CD4-positive, alpha-beta T cell (primary cell): ENCODE measurements at regions of chr17 and their contacts with region 1.

Region 1: DNA sequence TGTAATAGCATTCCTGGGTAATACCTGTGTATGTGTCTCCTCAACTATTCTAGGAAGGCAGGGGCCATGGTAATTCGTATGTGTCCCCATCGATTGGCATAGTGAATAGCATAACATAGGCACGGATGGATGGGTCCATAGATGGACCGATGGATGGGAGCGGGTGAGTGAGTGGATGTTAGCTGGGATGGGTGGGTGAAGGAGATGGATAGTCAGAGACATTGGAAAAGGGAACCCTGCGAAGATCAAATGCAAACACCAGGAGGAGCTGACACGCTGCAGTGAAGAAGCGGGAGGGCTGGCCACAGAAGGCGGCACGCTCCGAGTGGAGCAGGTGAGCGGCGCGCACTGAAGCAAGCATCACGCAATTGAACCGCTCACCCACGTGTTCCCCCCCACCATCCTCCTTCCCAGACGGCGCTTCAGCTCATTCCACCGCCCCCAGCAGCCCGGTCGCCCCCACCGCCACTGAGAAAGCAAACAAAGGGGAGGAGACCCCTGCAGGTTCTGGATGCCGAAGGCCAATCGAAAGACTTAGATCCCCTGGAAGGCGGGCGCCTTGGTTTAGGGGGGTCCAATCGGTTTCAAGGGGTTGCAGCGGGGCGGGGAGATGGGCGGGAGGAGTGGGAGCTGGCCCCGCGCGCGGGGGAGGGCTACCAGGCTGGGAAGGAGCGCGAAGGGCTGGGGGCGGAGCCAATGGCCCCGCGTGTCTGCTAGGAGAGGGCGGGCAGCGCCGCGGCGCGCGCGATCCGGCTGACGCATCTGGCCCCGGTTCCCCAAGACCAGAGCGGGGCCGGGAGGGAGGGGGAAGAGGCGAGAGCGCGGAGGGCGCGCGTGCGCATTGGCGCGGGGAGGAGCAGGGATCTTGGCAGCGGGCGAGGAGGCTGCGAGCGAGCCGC is at the start of gene ARRB2:
- DNase-seq: peak; percentile 97 to 100 (median 99)
- ATAC-seq: peak; percentile 79
- H3K4me3 ChIP-seq: peak within 1 kb of the TSS; percentile 90
- H3K4me3 Mint-ChIP-seq: peak within 1 kb of the TSS; percentile 98
- H3K27ac ChIP-seq: peak within 1 kb of the TSS; percentile 82 to 92
- H3K27ac Mint-ChIP-seq: peak within 1 kb of the TSS; percentile 83
- H3K4me1 ChIP-seq: peaks cover 52% of the 10 kb centered on the region
- H3K4me1 Mint-ChIP-seq: peaks cover 59% of the 10 kb centered on the region
- H3K27me3 ChIP-seq: no peaks in the 10 kb centered on the region
- H3K27me3 Mint-ChIP-seq: no peaks in the 10 kb centered on the region
- CTCF ChIP-seq: peak; percentile 86
- total RNA-seq, gene ARRB2: 210 to 220 TPM

Region 2: GRCh38 chr17:4721203-4722135 is 11.4 kb after region 1 on chr17:
- CTCF ChIA-PET with region 1: interaction called, 3 read pairs
- POLR2A ChIA-PET with region 1: interaction called, 12 read pairs
- intact Hi-C with region 1: no loop called
- DNase-seq: peak in 4 of 14 experiments; percentile 30 to 67 (median 43)
- ATAC-seq: no peak
- H3K4me3 ChIP-seq: no peak overlapping the region
- H3K4me3 Mint-ChIP-seq: no peak overlapping the region
- H3K27ac ChIP-seq: peak overlapping the region in 1 of 2 donors; percentile 9
- H3K27ac Mint-ChIP-seq: peak overlapping the region; percentile 28
- H3K4me1 ChIP-seq: peaks cover 18% of the 10 kb centered on the region
- H3K4me1 Mint-ChIP-seq: peaks cover 7% of the 10 kb centered on the region
- H3K27me3 ChIP-seq: no peaks in the 10 kb centered on the region
- H3K27me3 Mint-ChIP-seq: no peaks in the 10 kb centered on the region
- CTCF ChIP-seq: no peak

Region 3: DNA sequence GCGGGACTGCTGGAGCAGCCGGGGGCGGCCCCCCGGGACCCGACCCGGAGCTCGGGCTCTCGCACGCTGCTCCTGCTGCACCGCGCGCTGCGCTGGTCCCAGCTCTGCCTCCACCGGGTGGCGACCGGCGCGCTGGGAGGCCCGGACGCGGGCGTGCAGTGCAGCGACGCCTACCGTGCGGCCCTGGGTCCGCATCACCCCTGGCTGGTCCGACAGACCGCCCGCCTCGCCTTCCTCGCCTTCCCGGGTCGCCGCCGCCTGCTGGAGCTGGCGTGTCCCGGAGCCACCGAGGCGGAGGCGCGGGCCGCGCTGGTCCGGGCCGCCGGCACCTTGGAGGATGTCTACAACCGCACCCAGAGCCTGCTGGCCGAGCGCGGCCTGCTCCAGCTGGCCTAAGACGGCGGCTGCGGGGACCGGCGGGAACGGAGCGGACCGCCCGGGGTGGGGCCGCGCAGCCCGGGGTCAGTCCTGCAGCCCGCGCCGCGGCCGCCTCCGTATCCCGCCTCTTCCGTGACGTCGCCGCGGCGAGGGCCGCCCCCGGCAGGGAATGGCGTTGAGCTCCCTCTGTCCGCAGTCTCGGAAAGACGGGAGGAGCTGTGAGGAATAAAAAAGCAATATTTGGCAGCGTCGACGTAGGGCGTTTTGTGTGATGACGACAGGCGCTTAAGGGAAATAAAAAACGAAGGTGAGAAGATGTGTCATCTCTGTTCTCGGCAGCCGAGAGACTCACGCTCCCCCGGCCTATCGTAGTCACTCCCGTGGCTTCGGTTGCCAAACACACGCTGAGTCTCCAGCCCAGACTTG is 80.1 kb after region 1 on chr17:
- CTCF ChIA-PET with region 1: interaction called, 30 read pairs
- POLR2A ChIA-PET with region 1: interaction called, 27 read pairs
- intact Hi-C with region 1: loop called (anchors 1 to 2 kb)
- DNase-seq: peak; percentile 61 to 92 (median 74)
- ATAC-seq: peak; percentile 85
- H3K4me3 ChIP-seq: peak overlapping the region; percentile 65
- H3K4me3 Mint-ChIP-seq: peak overlapping the region; percentile 91
- H3K27ac ChIP-seq: peak overlapping the region; percentile 58 to 74
- H3K27ac Mint-ChIP-seq: peak overlapping the region; percentile 74
- H3K4me1 ChIP-seq: peaks cover 36% of the 10 kb centered on the region
- H3K4me1 Mint-ChIP-seq: peaks cover 24% of the 10 kb centered on the region
- H3K27me3 ChIP-seq: peaks cover 29% of the 10 kb centered on the region in 2 experiments
- H3K27me3 Mint-ChIP-seq: peaks cover 45% of the 10 kb centered on the region
- CTCF ChIP-seq: peak; percentile 81

Region 4: GRCh38 chr17:4833178-4833940 is 123.3 kb after region 1 on chr17 and contains the start of gene MINK1:
- CTCF ChIA-PET with region 1: interaction called, 3 read pairs
- POLR2A ChIA-PET with region 1: interaction called, 12 read pairs
- intact Hi-C with region 1: no loop called
- DNase-seq: peak; percentile 76 to 98 (median 88)
- ATAC-seq: peak; percentile 87
- H3K4me3 ChIP-seq: peak within 1 kb of the TSS; percentile 85
- H3K4me3 Mint-ChIP-seq: peak within 1 kb of the TSS; percentile 94
- H3K27ac ChIP-seq: peak within 1 kb of the TSS; percentile 63 to 74
- H3K27ac Mint-ChIP-seq: peak within 1 kb of the TSS; percentile 80
- H3K4me1 ChIP-seq: peaks cover 32% of the 10 kb centered on the region
- H3K4me1 Mint-ChIP-seq: peaks cover 48% of the 10 kb centered on the region
- H3K27me3 ChIP-seq: no peaks in the 10 kb centered on the region
- H3K27me3 Mint-ChIP-seq: no peaks in the 10 kb centered on the region
- CTCF ChIP-seq: no peak
- total RNA-seq, gene MINK1: 163 to 171 TPM

Region 5: DNA sequence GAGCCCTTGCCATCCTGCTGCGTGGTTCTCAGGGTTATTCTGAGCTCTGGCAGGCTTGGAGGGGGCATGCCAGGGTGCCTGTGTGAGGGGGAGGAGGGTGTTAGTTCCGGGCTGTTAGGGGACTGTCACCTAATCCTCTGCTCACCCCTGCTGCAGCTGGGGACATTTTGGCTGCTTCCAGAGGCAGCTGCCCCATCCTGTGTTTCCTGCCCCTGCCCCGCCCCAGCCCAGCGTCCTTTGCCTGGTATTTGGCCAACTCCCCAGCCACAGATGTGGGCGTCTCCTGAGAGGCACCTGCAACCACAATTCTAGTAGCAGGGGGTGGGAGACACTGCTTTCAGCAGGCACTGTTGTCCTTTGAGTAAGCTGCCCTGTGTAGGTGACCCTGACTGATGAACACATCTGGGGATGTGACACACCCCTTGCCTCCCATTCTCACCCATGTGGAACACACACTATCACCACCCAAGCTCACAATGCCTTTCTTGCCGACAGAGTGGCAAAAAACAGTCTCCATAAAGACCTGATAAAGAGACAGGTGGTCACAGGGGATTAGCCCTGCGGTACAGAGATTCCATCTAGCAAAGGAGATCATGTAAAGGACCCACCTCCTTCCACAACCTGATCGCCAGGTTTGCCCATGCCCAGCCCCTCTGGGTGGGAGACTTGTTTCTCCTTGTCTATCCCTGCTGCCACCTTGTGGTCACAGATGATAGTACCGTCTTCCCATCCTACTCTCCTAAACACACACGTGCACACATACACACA is 193.2 kb after region 1 on chr17 and contains the start of gene CHRNE:
- CTCF ChIA-PET with region 1: interaction called, 6 read pairs
- POLR2A ChIA-PET with region 1: interaction called, 14 read pairs
- intact Hi-C with region 1: no loop called
- DNase-seq: peak; percentile 55 to 91 (median 70)
- ATAC-seq: peak; percentile 33
- H3K4me3 ChIP-seq: no peak within 1 kb of the TSS
- H3K4me3 Mint-ChIP-seq: peak within 1 kb of the TSS; percentile 76
- H3K27ac ChIP-seq: no peak within 1 kb of the TSS
- H3K27ac Mint-ChIP-seq: peak within 1 kb of the TSS; percentile 94
- H3K4me1 ChIP-seq: peaks cover 54% of the 10 kb centered on the region
- H3K4me1 Mint-ChIP-seq: peaks cover 35% of the 10 kb centered on the region
- H3K27me3 ChIP-seq: no peaks in the 10 kb centered on the region
- H3K27me3 Mint-ChIP-seq: peaks cover 10% of the 10 kb centered on the region
- CTCF ChIP-seq: peak; percentile 89
- total RNA-seq, gene CHRNE: 3.2 to 3.7 TPM

Region 6: DNA sequence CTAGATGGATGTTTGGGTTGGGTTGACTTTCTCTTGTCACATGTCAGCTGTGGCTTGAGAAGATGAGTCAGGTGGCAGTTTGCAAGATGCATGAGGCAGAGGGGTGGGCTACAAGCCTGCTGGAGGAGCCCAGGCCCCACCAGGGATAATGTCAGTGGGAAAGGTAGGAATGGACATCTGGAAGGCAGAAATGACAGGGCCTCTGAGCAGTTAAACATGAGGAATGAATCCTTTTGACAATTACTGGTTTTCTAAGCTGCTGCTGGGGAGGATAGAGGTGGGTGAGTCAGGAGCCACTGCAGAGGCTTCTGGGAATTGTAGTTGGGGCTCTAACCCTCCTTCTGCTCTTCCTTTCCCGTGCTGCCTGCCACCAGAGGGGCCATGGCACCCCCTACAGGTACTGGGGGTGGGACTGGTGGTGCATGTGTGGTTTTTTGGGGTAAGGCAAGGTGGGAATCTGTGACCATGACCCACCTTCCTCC is 309.5 kb after region 1 on chr17:
- CTCF ChIA-PET with region 1: no interaction called
- POLR2A ChIA-PET with region 1: no interaction called
- intact Hi-C with region 1: no loop called
- DNase-seq: peak in 10 of 14 experiments; percentile 18 to 63 (median 46)
- ATAC-seq: peak; percentile 88
- H3K4me3 ChIP-seq: no peak overlapping the region
- H3K4me3 Mint-ChIP-seq: no peak overlapping the region
- H3K27ac ChIP-seq: no peak overlapping the region
- H3K27ac Mint-ChIP-seq: no peak overlapping the region
- H3K4me1 ChIP-seq: no peaks in the 10 kb centered on the region
- H3K4me1 Mint-ChIP-seq: peaks cover 4% of the 10 kb centered on the region
- H3K27me3 ChIP-seq: no peaks in the 10 kb centered on the region
- H3K27me3 Mint-ChIP-seq: no peaks in the 10 kb centered on the region
- CTCF ChIP-seq: peak; percentile 29

Region 7: DNA sequence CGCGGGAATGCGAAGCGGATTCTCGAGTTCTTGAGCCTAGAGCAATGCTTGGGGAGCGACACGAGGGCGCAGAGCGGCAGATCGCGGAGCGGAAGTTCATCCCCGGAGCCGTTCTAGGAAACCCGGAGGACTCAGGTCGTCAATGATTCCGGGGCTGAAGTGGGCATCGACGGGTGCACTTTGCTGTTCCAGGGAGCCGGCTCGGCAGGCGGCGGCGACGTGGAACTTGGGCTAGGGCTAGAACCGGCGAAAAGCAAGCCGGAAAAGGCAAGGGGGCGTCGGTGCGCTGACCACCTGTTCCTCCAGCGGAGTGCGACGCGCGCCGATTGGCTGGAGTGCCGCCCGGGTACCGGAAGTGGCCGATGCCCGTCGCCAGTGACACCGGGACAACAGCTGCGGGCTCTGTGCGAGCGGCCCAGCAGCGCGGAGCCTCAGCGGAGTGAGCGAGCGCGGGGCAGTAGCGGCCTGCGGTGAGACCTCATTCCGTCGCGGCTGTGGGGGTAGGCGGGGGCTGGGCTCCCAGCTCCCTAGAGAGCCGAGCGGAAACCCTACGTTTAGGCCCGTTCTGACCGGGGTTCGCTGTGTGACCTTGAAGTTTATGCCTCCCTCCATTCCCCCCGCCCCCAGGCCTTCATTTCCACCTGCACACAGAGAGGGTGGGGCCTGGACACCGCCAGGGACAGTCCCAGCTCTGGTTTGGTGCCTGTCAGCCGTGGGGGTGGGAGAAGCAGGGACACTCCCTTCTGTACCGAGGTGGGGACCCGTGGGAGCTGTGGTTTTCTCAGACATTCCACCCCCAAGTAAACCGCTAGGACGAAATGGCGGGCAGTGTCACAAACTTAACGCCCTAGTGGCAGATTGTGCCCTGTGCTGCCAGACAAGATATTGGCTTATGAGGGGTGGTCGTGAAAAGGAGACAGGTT is 368.3 kb after region 1 on chr17 and contains the start of gene ZFP3:
- CTCF ChIA-PET with region 1: no interaction called
- POLR2A ChIA-PET with region 1: no interaction called
- intact Hi-C with region 1: loop called in 1 of 2 experiments (anchors 10 kb)
- DNase-seq: peak; percentile 42 to 85 (median 65)
- ATAC-seq: peak; percentile 76
- H3K4me3 ChIP-seq: peak within 1 kb of the TSS; percentile 77
- H3K4me3 Mint-ChIP-seq: peak within 1 kb of the TSS; percentile 93
- H3K27ac ChIP-seq: peak within 1 kb of the TSS; percentile 49 to 72
- H3K27ac Mint-ChIP-seq: peak within 1 kb of the TSS; percentile 91
- H3K4me1 ChIP-seq: peaks cover 26% of the 10 kb centered on the region
- H3K4me1 Mint-ChIP-seq: peaks cover 34% of the 10 kb centered on the region
- H3K27me3 ChIP-seq: no peaks in the 10 kb centered on the region
- H3K27me3 Mint-ChIP-seq: no peaks in the 10 kb centered on the region
- CTCF ChIP-seq: no peak
- total RNA-seq, gene ZFP3: 2.4 TPM